HEK293T (cell line): ENCODE measurements at regions of chr17 and their contacts with region 1.

Region 1: GRCh38 chr17:58231641-58232040 is 6.7 kb upstream of the LPO start:
- DNase-seq: no peak

Region 2: DNA sequence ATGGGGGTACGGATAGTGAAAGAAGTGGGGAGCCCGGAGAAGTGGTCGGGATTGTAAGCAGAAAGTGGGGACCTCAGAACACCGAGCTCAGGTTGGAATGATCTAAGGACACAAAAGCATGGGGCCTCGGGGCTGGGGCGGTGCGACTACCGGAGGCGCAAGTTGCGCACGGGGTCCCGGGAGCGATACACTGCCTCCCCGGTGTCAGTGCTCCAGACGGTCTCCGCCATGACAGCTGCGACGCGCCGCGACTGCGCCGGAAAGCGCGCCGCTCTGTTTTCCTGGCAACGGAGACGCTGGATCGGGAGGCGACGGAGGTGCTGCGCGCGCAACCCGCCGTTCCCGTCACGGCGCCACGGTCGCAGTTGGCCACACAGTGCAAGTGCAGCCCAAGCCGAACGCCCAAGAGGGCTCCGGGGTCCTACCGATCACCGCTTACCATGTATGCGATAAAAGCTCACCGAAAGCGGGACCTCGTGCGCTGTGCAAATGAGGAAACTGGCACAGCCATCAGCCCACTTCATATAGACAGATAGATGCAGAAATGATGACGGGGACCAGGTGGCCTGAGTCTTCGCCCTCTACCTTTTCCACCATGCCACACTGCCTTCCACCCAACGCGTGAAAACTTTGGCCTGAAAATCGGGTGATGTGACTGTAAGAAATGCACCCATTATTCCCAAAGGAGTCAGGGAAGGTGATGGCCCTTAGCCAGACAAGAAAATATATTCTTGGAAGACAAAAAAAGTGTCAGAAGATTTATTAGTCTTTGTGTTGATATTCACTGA is 12.4 kb before region 1 on chr17 and contains the start of gene MKS1:
- CTCF ChIA-PET with region 1: interaction called, 3 read pairs
- POLR2A ChIA-PET with region 1: interaction called, 11 read pairs
- DNase-seq: peak; percentile 100